Activated CD8-positive, alpha-beta T cell treated with anti-CD3 and anti-CD28 coated beads for 36 hours (primary cell): ENCODE measurements at regions of chr5 and their contacts with region 1.

Region 1: GRCh38 chr5:38420691-38421390 is 135.6 kb downstream of the LIFR start:
- DNase-seq: peak; percentile 54
- ATAC-seq: no peak
- H3K4me3 Mint-ChIP-seq: no peak overlapping the region
- H3K27ac Mint-ChIP-seq: no peak overlapping the region
- H3K4me1 Mint-ChIP-seq: no peaks in the 10 kb centered on the region
- H3K27me3 Mint-ChIP-seq: peaks cover 23% of the 10 kb centered on the region
- CTCF ChIP-seq: peak; percentile 78

Region 2: DNA sequence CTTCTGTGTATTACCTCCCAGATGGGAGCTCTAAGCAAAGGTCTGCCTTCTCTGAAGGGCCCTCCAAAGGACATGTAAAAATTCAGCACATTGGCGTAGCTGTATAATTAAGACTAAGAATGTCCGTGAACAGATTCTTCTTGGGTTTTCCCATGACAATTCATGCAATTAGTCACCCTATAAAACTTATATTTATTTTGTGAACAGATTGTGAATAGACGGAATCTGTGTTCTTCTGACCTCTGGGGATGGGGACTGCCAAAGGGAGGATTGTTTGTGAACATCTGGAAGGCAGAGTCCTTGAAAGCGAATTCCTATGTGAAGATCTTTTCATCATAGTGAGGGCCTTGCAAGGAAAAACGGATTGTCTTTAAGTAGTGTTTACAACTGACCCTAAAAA is 51.1 kb before region 1 on chr5:
- CTCF ChIA-PET with region 1: no interaction called
- POLR2A ChIA-PET with region 1: no interaction called
- intact Hi-C with region 1: no loop called
- DNase-seq: no peak
- ATAC-seq: no peak
- H3K4me3 Mint-ChIP-seq: no peak overlapping the region
- H3K27ac Mint-ChIP-seq: no peak overlapping the region
- H3K4me1 Mint-ChIP-seq: peaks cover 11% of the 10 kb centered on the region
- H3K27me3 Mint-ChIP-seq: peaks cover 1% of the 10 kb centered on the region
- CTCF ChIP-seq: no peak

Region 3: GRCh38 chr5:38382898-38383297 is 37.9 kb before region 1 on chr5:
- CTCF ChIA-PET with region 1: interaction called, 20 read pairs
- POLR2A ChIA-PET with region 1: no interaction called
- intact Hi-C with region 1: no loop called
- DNase-seq: peak; percentile 68
- ATAC-seq: peak; percentile 92
- H3K4me3 Mint-ChIP-seq: no peak overlapping the region
- H3K27ac Mint-ChIP-seq: no peak overlapping the region
- H3K4me1 Mint-ChIP-seq: peaks cover 8% of the 10 kb centered on the region
- H3K27me3 Mint-ChIP-seq: peaks cover 22% of the 10 kb centered on the region
- CTCF ChIP-seq: peak; percentile 66

Region 4: DNA sequence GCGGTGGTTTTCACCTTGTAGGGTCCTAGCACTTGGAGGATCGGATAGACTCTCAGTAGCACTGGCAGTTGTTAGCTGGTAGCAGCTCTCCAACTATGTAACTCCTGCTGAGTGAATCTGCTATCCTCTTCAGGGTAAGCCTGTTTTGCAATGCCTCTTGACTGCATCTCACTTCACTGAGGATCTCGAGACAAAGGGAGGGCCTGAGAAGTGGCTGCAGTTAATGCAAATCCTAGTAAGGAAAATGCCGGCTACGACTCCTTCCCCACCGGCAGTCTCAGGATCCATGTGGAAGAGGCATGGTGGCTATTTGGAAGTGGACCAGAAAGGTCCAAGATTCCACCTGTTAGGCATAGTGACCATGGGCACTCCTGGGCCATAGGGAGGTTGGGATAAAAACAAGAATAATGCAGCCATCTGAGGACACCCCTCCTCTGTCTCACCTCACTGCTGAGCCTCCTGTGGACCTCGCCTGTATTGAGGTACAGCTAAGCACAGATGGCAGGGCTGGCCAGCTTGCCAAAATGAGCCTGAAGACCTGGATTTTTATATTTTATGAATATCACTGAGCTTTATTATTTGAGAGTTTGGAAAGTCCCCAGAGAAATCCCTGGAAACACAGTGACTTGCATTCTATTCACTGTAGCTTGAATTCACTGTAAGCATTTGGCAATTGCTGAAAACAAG is 10.4 kb before region 1 on chr5:
- CTCF ChIA-PET with region 1: interaction called, 10 read pairs
- POLR2A ChIA-PET with region 1: no interaction called
- intact Hi-C with region 1: no loop called
- DNase-seq: no peak
- ATAC-seq: no peak
- H3K4me3 Mint-ChIP-seq: no peak overlapping the region
- H3K27ac Mint-ChIP-seq: no peak overlapping the region
- H3K4me1 Mint-ChIP-seq: no peaks in the 10 kb centered on the region
- H3K27me3 Mint-ChIP-seq: peaks cover 16% of the 10 kb centered on the region
- CTCF ChIP-seq: no peak

Region 5: GRCh38 chr5:38433160-38433861 is 12.5 kb after region 1 on chr5:
- CTCF ChIA-PET with region 1: interaction called, 13 read pairs
- POLR2A ChIA-PET with region 1: no interaction called
- intact Hi-C with region 1: no loop called
- DNase-seq: no peak
- ATAC-seq: no peak
- H3K4me3 Mint-ChIP-seq: no peak overlapping the region
- H3K27ac Mint-ChIP-seq: no peak overlapping the region
- H3K4me1 Mint-ChIP-seq: no peaks in the 10 kb centered on the region
- H3K27me3 Mint-ChIP-seq: peaks cover 37% of the 10 kb centered on the region
- CTCF ChIP-seq: no peak

Region 6: DNA sequence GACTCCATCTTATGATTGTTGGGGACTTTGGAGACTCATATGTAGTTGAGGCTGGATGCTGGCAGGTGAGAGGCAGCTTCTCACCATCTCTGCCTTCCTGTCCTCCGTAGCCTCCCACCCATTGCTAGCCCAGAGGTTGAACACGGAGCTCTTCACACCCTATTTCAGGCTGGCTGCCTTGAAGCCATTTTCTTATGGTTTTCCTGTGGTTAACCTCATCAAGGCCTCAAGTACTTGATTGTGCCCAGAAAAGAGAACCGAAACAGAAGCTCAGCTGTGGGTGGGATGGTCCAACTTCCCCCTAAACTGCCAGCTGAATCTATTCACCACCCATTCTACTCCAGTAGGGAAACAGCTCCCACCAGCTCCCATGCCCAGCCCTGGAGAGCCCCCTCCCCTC is 32.7 kb after region 1 on chr5:
- CTCF ChIA-PET with region 1: interaction called, 14 read pairs
- POLR2A ChIA-PET with region 1: no interaction called
- intact Hi-C with region 1: no loop called
- DNase-seq: peak; percentile 74
- ATAC-seq: peak; percentile 96
- H3K4me3 Mint-ChIP-seq: no peak overlapping the region
- H3K27ac Mint-ChIP-seq: peak overlapping the region; percentile 31
- H3K4me1 Mint-ChIP-seq: peaks cover 27% of the 10 kb centered on the region
- H3K27me3 Mint-ChIP-seq: peaks cover 71% of the 10 kb centered on the region
- CTCF ChIP-seq: no peak

Region 7: GRCh38 chr5:38809388-38810359 is 388.8 kb after region 1 on chr5:
- CTCF ChIA-PET with region 1: interaction called, 60 read pairs
- POLR2A ChIA-PET with region 1: no interaction called
- intact Hi-C with region 1: no loop called
- DNase-seq: peak; percentile 77
- ATAC-seq: peak; percentile 69
- H3K4me3 Mint-ChIP-seq: no peak overlapping the region
- H3K27ac Mint-ChIP-seq: no peak overlapping the region
- H3K4me1 Mint-ChIP-seq: peaks cover 8% of the 10 kb centered on the region
- H3K27me3 Mint-ChIP-seq: peaks cover 27% of the 10 kb centered on the region
- CTCF ChIP-seq: peak; percentile 77